H1 (cell line): ENCODE measurements at regions of chr1 and their contacts with region 1.

Region 1: GRCh38 chr1:64163970-64164369 is 39.5 kb upstream of the UBE2U start:
- DNase-seq: no peak
- H3K4me3 ChIP-seq: no peak overlapping the region
- H3K27ac ChIP-seq: no peak overlapping the region
- H3K4me1 ChIP-seq: no peaks in the 10 kb centered on the region
- H3K27me3 ChIP-seq: no peaks in the 10 kb centered on the region
- CTCF ChIP-seq: peak in 2 of 3 experiments; percentile 52 to 62; a peak in 3 of 4 replicates
- EP300 ChIP-seq: no peak
- POLR2A ChIP-seq: no peak
- RAD21 ChIP-seq: peak; percentile 69 to 72

Region 2: GRCh38 chr1:64147759-64148158 is 16.2 kb before region 1 on chr1:
- CTCF ChIA-PET with region 1: interaction called, 25 read pairs
- POLR2A ChIA-PET with region 1: no interaction called
- DNase-seq: no peak
- H3K4me3 ChIP-seq: no peak overlapping the region
- H3K27ac ChIP-seq: no peak overlapping the region
- H3K4me1 ChIP-seq: peaks cover 0 to 2% (median under 1%) of the 10 kb centered on the region in 4 experiments; a peak in 2 of 7 replicates
- H3K27me3 ChIP-seq: no peaks in the 10 kb centered on the region
- CTCF ChIP-seq: no peak
- EP300 ChIP-seq: no peak
- POLR2A ChIP-seq: no peak
- RAD21 ChIP-seq: no peak

Region 3: DNA sequence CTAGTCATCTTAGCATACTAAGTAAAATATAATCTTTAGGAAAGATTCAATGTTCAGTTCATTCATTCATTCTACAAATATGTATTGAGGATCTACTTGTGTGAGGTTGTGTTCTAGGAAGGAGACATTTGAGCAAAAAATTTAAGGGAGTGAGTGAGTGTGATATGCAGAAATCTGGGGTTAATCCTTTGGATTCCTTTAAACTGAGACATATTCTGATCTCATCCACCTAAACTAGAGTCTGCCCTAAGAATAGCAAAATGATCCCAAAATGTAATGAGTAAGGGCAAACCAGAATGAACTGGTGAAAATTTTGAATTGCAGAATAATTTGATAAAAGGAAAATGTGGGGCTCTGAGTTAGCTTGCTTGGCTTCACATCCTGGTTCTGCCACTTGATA is 48.1 kb after region 1 on chr1:
- CTCF ChIA-PET with region 1: no interaction called
- POLR2A ChIA-PET with region 1: no interaction called
- DNase-seq: no peak
- H3K4me3 ChIP-seq: no peak overlapping the region
- H3K27ac ChIP-seq: no peak overlapping the region
- H3K4me1 ChIP-seq: no peaks in the 10 kb centered on the region
- H3K27me3 ChIP-seq: no peaks in the 10 kb centered on the region
- CTCF ChIP-seq: no peak
- EP300 ChIP-seq: no peak
- POLR2A ChIP-seq: no peak
- RAD21 ChIP-seq: no peak